Upper lobe of right lung (tissue), 1 donor: ENCODE measurements at regions of chr2 and their contacts with region 1.

Region 1: DNA sequence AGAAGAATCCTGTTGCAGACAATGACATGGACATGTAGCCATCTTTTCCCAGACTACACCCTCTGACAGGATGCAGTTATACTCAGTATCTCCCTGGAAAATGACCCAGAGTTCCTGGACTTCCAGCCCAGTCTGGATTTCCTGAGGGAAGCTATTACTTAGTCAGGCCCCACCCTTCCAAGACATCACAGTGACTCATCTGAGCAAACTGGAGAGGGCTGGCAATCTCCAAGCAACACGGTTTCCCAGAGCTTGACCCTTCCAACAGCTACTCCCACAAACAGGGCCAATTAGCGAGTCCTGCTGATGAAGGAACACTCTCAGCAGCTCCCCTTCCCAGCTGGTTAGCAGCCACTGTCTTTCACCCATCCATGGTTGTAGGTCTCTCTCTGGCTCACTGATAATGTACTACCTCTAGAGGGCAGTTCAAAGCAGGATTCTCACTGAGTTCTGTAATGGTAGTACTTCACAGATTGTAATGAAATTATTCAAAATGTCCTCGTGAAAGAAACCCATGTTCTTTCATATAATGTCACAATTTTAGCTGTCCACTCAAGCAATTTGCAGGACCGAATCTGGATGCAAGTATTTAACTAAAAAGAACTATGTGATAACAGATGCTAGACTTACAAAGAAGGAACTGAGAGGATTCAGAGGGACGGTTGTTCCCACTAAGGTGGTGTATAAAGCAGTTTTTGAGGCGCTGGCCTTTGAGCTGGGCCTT is 110.2 kb downstream of the MDH1 start:
- DNase-seq: no peak
- ATAC-seq: peak; percentile 88
- H3K4me3 ChIP-seq: no peak overlapping the region
- H3K27ac ChIP-seq: no peak overlapping the region
- H3K4me1 ChIP-seq: no peaks in the 10 kb centered on the region
- H3K27me3 ChIP-seq: no peaks in the 10 kb centered on the region
- CTCF ChIP-seq: peak; percentile 56

Region 2: DNA sequence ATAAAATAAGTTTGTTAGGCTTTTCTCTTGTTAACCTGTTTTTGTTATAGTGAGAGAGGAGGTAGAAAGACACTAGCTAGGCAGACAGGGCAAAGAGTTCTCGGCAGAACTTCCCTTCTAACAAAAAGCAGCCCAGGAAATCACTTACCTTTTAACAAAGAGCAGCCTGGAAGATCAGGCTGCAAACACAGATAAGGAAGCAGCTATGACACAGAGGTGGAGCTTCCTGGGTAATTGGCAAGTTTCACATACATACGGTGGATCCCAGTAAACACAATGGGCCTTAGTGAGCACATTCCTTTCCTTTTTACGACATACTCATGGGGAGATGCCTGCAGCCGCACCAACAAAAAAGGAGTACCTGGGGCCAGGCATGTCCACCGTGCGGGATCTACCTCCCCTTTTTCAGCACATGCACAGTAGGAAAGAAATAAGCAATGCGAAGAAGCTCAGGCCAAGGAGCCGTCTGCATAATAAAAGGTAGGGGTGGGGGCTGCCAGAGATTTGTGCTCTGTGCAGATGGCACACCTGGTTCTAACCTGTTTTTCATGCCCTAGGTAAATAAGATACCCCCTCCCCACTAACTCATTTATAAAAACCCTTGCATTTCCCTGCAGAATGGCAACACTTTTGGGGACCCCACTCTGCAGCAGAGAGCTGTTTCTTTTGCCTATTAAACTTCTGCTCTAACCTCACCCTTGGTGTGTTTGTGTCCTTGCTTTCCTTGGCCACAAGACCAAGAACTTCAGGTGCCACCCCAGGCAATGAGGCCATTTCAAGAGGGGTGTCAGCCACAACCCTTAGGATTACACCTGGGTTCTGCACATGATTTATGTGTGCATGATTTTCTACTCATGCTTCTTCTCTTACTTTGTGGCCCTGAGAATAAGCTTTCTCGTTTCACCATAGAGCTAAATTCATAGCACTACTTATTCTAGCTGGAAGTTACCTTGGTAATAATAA is 83.7 kb before region 1 on chr2:
- intact Hi-C with region 1: no loop called
- DNase-seq: no peak
- ATAC-seq: no peak
- H3K4me3 ChIP-seq: no peak overlapping the region
- H3K27ac ChIP-seq: no peak overlapping the region
- H3K4me1 ChIP-seq: no peaks in the 10 kb centered on the region
- H3K27me3 ChIP-seq: no peaks in the 10 kb centered on the region
- CTCF ChIP-seq: no peak

Region 3: DNA sequence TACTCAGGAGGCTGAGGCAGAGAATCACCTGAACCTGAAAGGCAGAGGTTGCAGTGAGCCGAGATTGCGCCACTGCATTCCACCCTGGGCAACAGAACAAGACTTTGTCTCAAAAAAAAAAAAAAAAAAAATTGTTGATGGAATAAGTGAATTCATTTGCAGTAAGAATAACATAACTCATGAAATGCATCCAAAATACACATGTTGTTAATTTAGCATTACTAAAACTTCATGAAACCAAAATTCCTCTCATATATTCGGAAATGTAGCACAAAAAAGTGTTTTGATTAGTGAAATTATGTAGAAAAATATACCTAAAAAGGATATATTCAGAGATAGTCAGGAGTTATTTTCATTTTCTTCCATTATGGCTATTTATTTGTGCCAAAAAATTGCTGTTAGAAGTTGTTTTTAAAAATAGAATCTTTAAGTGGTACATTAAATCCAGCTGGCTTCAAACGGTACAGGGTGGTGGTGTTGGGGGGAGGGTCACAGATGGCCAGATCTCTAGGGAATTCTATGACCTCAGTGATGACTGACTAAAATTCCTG is 64.5 kb after region 1 on chr2:
- intact Hi-C with region 1: no loop called
- DNase-seq: no peak
- ATAC-seq: no peak
- H3K4me3 ChIP-seq: no peak overlapping the region
- H3K27ac ChIP-seq: no peak overlapping the region
- H3K4me1 ChIP-seq: no peaks in the 10 kb centered on the region
- H3K27me3 ChIP-seq: no peaks in the 10 kb centered on the region
- CTCF ChIP-seq: no peak

Region 4: DNA sequence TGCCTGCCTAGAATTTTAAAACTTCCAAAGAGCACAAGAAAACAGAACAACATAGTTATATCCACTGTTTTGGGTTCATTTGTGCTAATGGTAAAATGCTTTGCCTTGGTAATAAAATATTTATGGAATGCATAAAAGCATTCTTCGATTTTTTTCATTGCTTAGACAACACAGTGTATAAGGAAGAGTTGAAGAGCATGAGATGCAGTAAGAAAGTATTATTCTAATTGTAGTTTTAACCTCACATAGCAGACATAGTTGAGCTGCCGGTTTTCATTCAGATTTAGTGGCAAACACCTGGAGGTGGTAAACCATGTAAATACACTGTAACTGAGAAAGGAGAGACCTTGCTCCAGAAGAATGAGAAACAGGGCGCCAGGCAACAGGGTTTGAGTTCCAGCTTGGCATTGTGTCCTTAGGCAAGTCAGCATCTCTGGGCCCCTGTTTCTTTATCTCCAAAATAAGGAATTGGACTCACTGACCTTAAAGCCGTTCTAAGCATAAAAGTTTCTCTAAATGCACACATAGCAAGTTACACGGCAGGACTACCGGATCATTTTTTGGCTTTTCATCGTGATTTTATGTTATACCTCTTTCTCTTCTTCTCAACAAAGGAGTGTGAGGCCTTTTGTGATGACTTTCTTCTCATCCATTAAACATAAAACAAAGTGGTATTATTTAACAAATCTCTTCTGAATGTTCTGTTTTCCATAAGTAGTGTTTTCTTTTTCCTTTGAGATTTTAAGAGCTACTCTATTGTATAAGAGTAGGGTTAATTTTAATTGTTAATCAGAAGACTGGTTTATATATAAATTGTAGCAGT is 150.6 kb after region 1 on chr2:
- intact Hi-C with region 1: loop called (anchors 10 kb)
- DNase-seq: no peak
- ATAC-seq: no peak
- H3K4me3 ChIP-seq: no peak overlapping the region
- H3K27ac ChIP-seq: no peak overlapping the region
- H3K4me1 ChIP-seq: peaks cover 52% of the 10 kb centered on the region
- H3K27me3 ChIP-seq: no peaks in the 10 kb centered on the region
- CTCF ChIP-seq: no peak